ENCODE measurements at regions of chr2 and their contacts with region 1.

Region 1: GRCh38 chr2:106269591-106270291 is 75.6 kb upstream of the UXS1 start:
- DNase-seq: peak; percentile 11 to 65 (median 44)
- ATAC-seq: peak; percentile 42 to 77 (median 56)
- H3K4me3 ChIP-seq: peak overlapping the region; percentile 1 to 57 (median 42)
- H3K27ac ChIP-seq: no peak overlapping the region
- H3K4me1 ChIP-seq: peaks cover 0 to 12% (median 4%) of the 10 kb centered on the region in 12 donors
- H3K27me3 ChIP-seq: peaks cover 0 to 14% (median 0%) of the 10 kb centered on the region in 9 donors
- CTCF ChIP-seq: no peak
- POLR2A ChIP-seq: no peak

Region 2: GRCh38 chr2:106542811-106543259 is 273.1 kb after region 1 on chr2:
- intact Hi-C with region 1: loop called in 1 of 10 experiments (anchors 10 kb)
- DNase-seq: peak; percentile 45 to 71 (median 61)
- ATAC-seq: peak; percentile 58 to 88 (median 80)
- H3K4me3 ChIP-seq: peak overlapping the region in 9 of 12 donors; percentile 18 to 38 (median 29)
- H3K27ac ChIP-seq: no peak overlapping the region
- H3K4me1 ChIP-seq: peaks cover 0 to 22% (median 0%) of the 10 kb centered on the region in 12 donors
- H3K27me3 ChIP-seq: peaks cover 0 to 23% (median 4%) of the 10 kb centered on the region in 9 donors
- CTCF ChIP-seq: peak; percentile 83 to 98 (median 92)
- POLR2A ChIP-seq: no peak